ENCODE measurements at regions of chr2 and their contacts with region 1.

Region 1: GRCh38 chr2:9251154-9252001 is 44.8 kb downstream of the ASAP2 start:
- DNase-seq: no peak
- H3K4me3 ChIP-seq: no peak overlapping the region
- H3K27ac ChIP-seq: peak overlapping the region; percentile 32
- H3K4me1 ChIP-seq: peaks cover 72% of the 10 kb centered on the region
- H3K27me3 ChIP-seq: no peaks in the 10 kb centered on the region
- CTCF ChIP-seq: no peak
- POLR2A ChIP-seq: no peak

Region 2: GRCh38 chr2:9205963-9206948 is 45.1 kb before region 1 on chr2 and contains the start of gene ASAP2:
- intact Hi-C with region 1: loop called (anchors 10 kb)
- DNase-seq: peak in 1 of 2 donors; percentile 88
- H3K4me3 ChIP-seq: peak within 1 kb of the TSS; percentile 54 to 88
- H3K27ac ChIP-seq: peak within 1 kb of the TSS; percentile 68
- H3K4me1 ChIP-seq: peaks cover 37% of the 10 kb centered on the region
- H3K27me3 ChIP-seq: no peaks in the 10 kb centered on the region
- CTCF ChIP-seq: peak; percentile 47 to 88 (median 68)
- POLR2A ChIP-seq: peak in 1 of 2 donors; percentile 9
- total RNA-seq, gene ASAP2: 36.3 TPM

Region 3: GRCh38 chr2:9430316-9431293 is 179.2 kb after region 1 on chr2:
- intact Hi-C with region 1: no loop called
- DNase-seq: no peak
- H3K4me3 ChIP-seq: no peak overlapping the region
- H3K27ac ChIP-seq: no peak overlapping the region
- H3K4me1 ChIP-seq: no peaks in the 10 kb centered on the region
- H3K27me3 ChIP-seq: no peaks in the 10 kb centered on the region
- CTCF ChIP-seq: no peak
- POLR2A ChIP-seq: no peak

Measured in vagina (tissue), 2 donors.